A673 (cell line): ENCODE measurements at regions of chr17 and their contacts with region 1.

Region 1: DNA sequence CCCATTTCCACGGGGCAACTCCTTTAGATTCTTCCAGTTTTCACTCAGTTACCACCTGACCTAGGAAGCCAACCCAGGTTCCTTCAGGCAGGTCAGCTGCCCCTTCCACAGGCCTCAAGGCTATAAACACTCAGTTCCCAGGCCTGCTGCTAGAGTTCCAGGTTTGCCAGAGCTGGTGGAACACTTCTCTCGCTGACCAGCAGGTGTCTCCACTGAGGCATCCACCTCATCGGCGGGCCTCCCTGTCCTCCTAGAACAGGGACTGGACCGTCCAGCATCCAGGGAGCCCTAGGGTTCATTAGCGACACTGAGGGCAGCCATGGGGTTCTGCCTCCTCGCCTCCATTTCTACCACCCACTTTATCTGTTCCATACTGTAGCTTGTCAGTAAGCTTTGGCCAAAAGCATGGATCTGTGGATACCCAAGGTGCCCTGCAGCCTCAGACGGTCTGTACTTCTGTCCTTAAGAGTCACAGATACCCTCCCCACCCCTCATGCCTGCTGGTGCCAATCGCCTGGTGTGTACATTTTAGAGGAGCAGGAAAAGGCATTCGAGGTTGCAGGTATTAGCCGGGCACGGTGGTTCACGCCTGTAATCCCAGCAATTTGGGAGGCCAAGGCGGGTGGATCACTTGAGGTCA is 29.0 kb downstream of the PIMREG start:
- DNase-seq: peak; percentile 71
- H3K4me3 ChIP-seq: no peak overlapping the region
- H3K27ac ChIP-seq: peak overlapping the region; percentile 41
- H3K4me1 ChIP-seq: peaks cover 23% of the 10 kb centered on the region
- H3K27me3 ChIP-seq: no peaks in the 10 kb centered on the region
- CTCF ChIP-seq: peak; percentile 97

Region 2: DNA sequence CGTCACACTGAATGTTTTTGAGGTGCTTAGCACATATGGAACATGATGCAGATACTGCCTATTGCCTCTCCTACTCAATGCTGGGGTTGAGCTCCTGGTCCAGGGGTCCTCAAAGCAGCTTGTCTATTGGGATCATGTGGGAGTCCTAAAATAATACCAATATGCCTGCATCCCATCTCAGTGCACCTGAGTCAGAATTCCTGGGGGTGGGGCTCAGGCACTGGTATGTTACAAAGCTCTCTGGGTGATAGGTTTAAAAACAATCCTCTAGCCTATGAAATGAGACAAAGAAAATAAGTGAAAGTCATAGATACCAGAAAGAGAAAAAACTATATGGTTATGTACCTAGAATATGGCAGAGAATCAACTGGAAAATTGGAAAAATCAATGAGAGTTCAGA is 732.3 kb before region 1 on chr17:
- CTCF ChIA-PET with region 1: interaction called, 11 read pairs
- POLR2A ChIA-PET with region 1: no interaction called
- intact Hi-C with region 1: no loop called
- DNase-seq: no peak
- H3K4me3 ChIP-seq: no peak overlapping the region
- H3K27ac ChIP-seq: no peak overlapping the region
- H3K4me1 ChIP-seq: no peaks in the 10 kb centered on the region
- H3K27me3 ChIP-seq: peaks cover 42% of the 10 kb centered on the region
- CTCF ChIP-seq: no peak

Region 3: GRCh38 chr17:6534846-6535514 is 61.7 kb after region 1 on chr17:
- CTCF ChIA-PET with region 1: interaction called, 12 read pairs
- POLR2A ChIA-PET with region 1: no interaction called
- intact Hi-C with region 1: no loop called
- DNase-seq: no peak
- H3K4me3 ChIP-seq: no peak overlapping the region
- H3K27ac ChIP-seq: no peak overlapping the region
- H3K4me1 ChIP-seq: no peaks in the 10 kb centered on the region
- H3K27me3 ChIP-seq: no peaks in the 10 kb centered on the region
- CTCF ChIP-seq: no peak

Region 4: DNA sequence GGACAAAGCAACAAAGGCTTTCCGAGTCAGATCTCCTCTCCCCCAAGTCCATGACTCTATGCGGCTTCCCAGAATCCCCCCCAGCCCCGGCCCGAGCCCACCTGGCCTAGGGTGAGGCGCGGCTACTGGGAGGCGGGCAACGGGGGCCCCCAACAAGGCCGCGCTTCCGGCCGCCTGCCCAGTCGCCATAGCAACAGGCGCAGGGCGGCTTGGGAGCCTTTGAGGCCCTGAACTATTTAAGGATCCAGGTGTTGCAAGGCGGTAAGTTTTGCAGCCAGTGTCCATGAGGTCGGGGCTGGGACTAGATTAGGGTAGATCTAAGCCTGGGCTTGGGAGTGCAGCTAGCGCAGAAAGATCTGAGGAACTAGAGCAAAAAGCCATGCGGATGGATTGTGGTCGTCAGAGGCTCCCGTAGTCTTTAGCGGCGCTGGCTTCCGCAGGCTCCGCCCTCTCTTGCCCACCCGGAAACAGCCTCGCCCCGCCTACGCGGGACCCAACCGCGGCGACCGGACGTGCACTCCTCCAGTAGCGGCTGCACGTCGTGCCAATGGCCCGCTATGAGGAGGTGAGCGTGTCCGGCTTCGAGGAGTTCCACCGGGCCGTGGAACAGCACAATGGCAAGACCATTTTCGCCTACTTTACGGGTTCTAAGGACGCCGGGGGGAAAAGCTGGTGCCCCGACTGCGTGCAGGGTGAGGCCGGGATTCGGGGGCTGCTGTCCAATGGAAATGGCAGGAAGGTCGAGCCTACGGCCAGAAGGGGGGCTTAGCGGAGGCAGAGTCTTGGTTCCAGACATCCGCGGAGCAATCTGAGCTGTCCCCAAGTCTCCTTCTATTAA is 167.5 kb after region 1 on chr17 and contains the starts of genes KIAA0753 and TXNDC17:
- CTCF ChIA-PET with region 1: interaction called, 3 read pairs
- POLR2A ChIA-PET with region 1: no interaction called
- intact Hi-C with region 1: loop called (anchors 10 kb)
- DNase-seq: peak; percentile 94
- H3K4me3 ChIP-seq: peak within 1 kb of the TSS; percentile 78
- H3K27ac ChIP-seq: peak within 1 kb of the TSS; percentile 95
- H3K4me1 ChIP-seq: peaks cover 19% of the 10 kb centered on the region
- H3K27me3 ChIP-seq: no peaks in the 10 kb centered on the region
- CTCF ChIP-seq: no peak
- total RNA-seq, gene KIAA0753: 41.2 and 42.8 TPM in 2 replicates
- total RNA-seq, gene TXNDC17: 140 and 147 TPM in 2 replicates

Region 5: DNA sequence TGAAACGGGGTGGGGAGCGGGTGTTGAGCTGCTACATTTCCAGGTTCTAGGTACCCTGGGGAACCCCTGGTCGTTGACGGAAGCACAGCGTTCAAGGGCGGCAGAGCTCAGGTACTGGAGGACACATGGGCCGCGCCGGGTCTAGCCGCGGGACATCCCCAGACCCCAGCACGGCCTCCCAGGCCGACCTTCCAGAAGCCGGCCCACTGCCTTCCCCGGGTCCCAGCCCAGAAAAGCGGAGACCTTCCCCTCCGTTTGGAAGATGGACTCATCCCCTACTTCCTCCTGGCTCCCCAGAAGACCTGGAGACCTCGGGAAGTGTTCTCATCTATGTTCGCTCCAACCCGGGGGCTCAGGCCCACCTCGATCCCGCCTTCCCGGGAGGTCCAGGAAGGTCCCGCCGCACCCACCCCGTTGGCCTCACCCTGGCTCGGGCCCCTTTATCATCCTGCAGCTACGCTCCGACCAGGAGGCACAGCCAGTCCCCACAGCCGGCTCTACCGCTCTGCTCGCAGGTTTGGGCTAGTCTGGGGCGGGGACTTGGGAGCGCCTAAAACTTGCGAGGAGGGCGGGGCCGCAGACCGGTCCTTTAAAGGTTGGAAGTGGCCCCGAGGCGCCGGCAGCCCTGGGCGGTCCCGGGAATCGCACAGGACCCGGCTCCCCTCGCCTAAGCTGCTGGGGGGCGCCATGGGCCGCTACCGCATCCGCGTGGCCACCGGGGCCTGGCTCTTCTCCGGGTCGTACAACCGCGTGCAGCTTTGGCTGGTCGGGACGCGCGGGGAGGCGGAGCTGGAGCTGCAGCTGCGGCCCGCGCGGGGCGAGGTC is 522.4 kb after region 1 on chr17 and contains the start of gene ALOX12:
- CTCF ChIA-PET with region 1: no interaction called
- POLR2A ChIA-PET with region 1: no interaction called
- intact Hi-C with region 1: no loop called
- DNase-seq: no peak
- H3K4me3 ChIP-seq: no peak within 1 kb of the TSS
- H3K27ac ChIP-seq: no peak within 1 kb of the TSS
- H3K4me1 ChIP-seq: no peaks in the 10 kb centered on the region
- H3K27me3 ChIP-seq: no peaks in the 10 kb centered on the region
- CTCF ChIP-seq: no peak
- total RNA-seq, gene ALOX12: not detected in 2 replicates